HCT116 (cell line): ENCODE measurements at regions of chr13 and their contacts with region 1.

Region 1: GRCh38 chr13:88068975-88069374 is 397.8 kb downstream of the SLITRK5 start:
- DNase-seq: no peak
- ATAC-seq: peak; percentile 64
- H3K4me3 ChIP-seq: no peak overlapping the region
- H3K27ac ChIP-seq: no peak overlapping the region
- H3K4me1 ChIP-seq: no peaks in the 10 kb centered on the region
- H3K27me3 ChIP-seq: no peaks in the 10 kb centered on the region
- CTCF ChIP-seq: peak in 2 of 3 experiments; percentile 31 to 37; a peak in 4 of 6 replicates
- POLR2A ChIP-seq: no peak
- RAD21 ChIP-seq: no peak

Region 2: GRCh38 chr13:89066868-89067466 is 998.0 kb after region 1 on chr13:
- CTCF ChIA-PET with region 1: no interaction called
- POLR2A ChIA-PET with region 1: no interaction called
- RAD21 ChIA-PET with region 1: no interaction called
- intact Hi-C with region 1: loop called (anchors 2 kb)
- DNase-seq: peak; percentile 38
- ATAC-seq: peak; percentile 66
- H3K4me3 ChIP-seq: no peak overlapping the region
- H3K27ac ChIP-seq: no peak overlapping the region
- H3K4me1 ChIP-seq: no peaks in the 10 kb centered on the region
- H3K27me3 ChIP-seq: no peaks in the 10 kb centered on the region
- CTCF ChIP-seq: peak; percentile 19 to 60 (median 53); a peak in 5 of 6 replicates
- POLR2A ChIP-seq: no peak
- RAD21 ChIP-seq: peak; percentile 60